Activated CD4-positive, alpha-beta T cell treated with anti-CD3 and anti-CD28 coated beads for 36 hours (primary cell): ENCODE measurements at regions of chr2 and their contacts with region 1.

Region 1: GRCh38 chr2:190849774-190850173 is 30.8 kb upstream of the GLS start:
- DNase-seq: no peak
- ATAC-seq: no peak
- H3K4me3 Mint-ChIP-seq: no peak overlapping the region
- H3K27ac Mint-ChIP-seq: no peak overlapping the region
- H3K4me1 Mint-ChIP-seq: peaks cover 18% of the 10 kb centered on the region
- H3K27me3 Mint-ChIP-seq: no peaks in the 10 kb centered on the region

Region 2: GRCh38 chr2:189592353-189592984 is 1257.3 kb before region 1 on chr2:
- CTCF ChIA-PET with region 1: no interaction called
- POLR2A ChIA-PET with region 1: no interaction called
- intact Hi-C with region 1: no loop called
- DNase-seq: no peak
- ATAC-seq: no peak
- H3K4me3 Mint-ChIP-seq: no peak overlapping the region
- H3K27ac Mint-ChIP-seq: peak overlapping the region; percentile 5
- H3K4me1 Mint-ChIP-seq: peaks cover 28% of the 10 kb centered on the region
- H3K27me3 Mint-ChIP-seq: no peaks in the 10 kb centered on the region

Region 3: DNA sequence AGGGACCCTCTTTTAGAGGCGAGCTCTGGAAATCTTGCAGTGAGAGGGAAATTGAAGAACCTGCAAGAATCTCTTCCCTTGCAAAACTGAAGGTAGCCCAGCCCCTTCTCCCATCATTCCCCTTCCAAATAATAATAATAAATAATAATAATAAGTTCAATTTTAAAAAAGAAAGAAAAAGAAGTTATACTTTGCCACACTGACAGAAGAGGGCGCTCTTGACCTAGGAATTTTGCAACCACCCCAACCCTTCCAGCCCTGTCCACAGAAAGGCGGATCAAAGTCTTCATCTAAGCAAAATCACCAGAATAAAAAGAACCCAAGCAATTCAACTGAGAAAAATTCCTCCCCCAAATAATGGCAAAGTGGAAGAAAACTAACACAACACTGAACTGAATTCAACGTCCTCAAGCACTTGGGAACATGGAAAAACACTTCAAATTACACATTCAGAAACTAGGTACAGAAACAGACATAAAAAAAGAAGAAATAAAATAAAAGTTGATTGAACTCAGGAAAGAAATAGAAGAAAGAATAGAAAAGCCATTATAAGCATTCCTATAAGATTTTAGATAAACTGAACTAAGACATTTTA is 68.1 kb before region 1 on chr2:
- CTCF ChIA-PET with region 1: interaction called, 12 read pairs
- POLR2A ChIA-PET with region 1: no interaction called
- intact Hi-C with region 1: loop called in 1 of 2 experiments (anchors 2 kb)
- DNase-seq: peak; percentile 77
- ATAC-seq: peak; percentile 58
- H3K4me3 Mint-ChIP-seq: no peak overlapping the region
- H3K27ac Mint-ChIP-seq: no peak overlapping the region
- H3K4me1 Mint-ChIP-seq: peaks cover 33% of the 10 kb centered on the region
- H3K27me3 Mint-ChIP-seq: no peaks in the 10 kb centered on the region

Region 4: DNA sequence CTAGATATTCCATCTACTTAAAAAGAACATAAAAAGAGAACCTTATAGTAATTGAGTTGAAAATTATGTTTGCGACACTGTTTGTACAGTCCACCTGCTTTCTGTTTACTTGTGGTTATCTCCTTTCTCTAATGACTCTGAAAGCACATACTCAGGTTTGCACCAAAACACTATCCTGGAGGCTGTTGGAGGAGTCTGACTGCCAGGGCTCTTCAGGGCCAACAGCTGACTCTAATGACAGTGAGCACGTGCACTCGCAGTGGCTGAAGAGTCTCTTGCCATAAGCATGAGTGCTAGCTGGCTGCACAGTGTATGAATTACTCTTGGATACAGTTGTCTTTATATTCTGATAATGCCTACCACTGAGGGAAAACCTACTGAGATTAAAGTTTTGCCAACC is 14.2 kb after region 1 on chr2:
- CTCF ChIA-PET with region 1: interaction called, 23 read pairs
- POLR2A ChIA-PET with region 1: no interaction called
- intact Hi-C with region 1: loop called in 1 of 2 experiments (anchors 1 kb)
- DNase-seq: no peak
- ATAC-seq: no peak
- H3K4me3 Mint-ChIP-seq: no peak overlapping the region
- H3K27ac Mint-ChIP-seq: no peak overlapping the region
- H3K4me1 Mint-ChIP-seq: peaks cover 26% of the 10 kb centered on the region
- H3K27me3 Mint-ChIP-seq: no peaks in the 10 kb centered on the region

Region 5: GRCh38 chr2:190887089-190887488 is 37.3 kb after region 1 on chr2:
- CTCF ChIA-PET with region 1: interaction called, 15 read pairs
- POLR2A ChIA-PET with region 1: interaction called, 9 read pairs
- intact Hi-C with region 1: loop called in 1 of 2 experiments (anchors 1 kb)
- DNase-seq: no peak
- ATAC-seq: peak; percentile 67
- H3K4me3 Mint-ChIP-seq: no peak overlapping the region
- H3K27ac Mint-ChIP-seq: no peak overlapping the region
- H3K4me1 Mint-ChIP-seq: peaks cover 64% of the 10 kb centered on the region
- H3K27me3 Mint-ChIP-seq: no peaks in the 10 kb centered on the region